GM10248 (cell line): ENCODE measurements at regions of chr3 and their contacts with region 1.

Region 1: DNA sequence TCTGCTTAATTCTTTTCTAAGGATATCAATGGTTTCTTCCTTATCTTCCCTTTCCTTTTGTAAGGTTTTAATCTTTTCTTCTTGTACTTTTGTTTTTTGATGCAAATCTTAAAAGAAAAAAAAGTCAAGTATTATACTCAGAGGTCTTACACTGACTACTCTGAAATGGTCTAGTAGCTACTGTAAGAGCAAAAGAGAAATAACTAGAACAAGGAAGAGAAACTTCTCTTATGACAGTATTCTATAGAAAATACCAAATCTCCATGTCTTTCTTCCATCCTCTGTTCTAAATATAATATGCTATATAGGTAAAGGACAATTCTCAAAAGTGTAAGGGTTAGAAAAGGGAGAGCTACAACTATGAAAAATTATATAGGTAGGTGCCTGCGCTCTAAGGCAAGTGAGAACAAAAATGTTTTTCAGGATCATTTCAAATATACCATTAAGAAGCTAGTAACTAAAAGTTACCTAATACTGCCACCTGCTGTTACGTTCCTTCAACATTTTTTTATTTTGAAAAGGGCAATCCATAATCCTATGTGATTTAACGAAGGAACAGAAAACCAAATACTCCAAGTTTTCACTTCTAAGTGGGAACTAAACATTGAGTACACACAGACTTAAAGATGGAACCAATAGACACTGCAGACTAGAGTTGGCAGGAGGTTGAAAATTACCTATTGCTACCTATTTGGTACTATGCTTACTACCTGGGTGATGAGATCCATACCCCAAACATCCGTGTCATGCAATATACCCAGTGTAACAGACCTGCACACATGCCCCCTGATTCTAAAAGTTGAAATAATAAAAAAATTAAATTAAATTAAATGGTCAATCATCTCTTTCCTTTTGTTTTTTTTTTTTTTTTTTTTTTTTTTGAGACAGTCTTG is 36.7 kb downstream of the CIP2A start:
- DNase-seq: peak; percentile 12
- CTCF ChIP-seq: peak; percentile 55

Region 2: DNA sequence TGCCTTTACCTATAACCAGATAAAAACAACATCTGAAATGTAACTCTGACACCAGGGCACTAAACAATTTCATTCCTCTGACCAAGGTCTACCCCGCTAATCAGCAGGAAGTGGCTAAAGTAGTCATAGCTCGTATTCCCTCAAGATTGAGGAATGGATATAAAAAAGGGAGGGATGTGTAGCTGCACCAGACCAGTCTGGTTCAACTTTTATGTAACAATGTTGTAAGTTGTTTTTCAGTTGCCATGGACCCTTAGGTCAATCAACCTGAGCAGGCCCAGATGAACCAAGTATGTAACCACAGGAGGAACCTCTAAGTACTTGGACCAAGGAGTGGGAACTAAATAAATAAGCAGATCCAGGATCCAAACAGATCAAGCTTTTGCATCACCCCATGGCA is 301.9 kb before region 1 on chr3:
- CTCF ChIA-PET with region 1: no interaction called
- POLR2A ChIA-PET with region 1: no interaction called
- DNase-seq: no peak
- CTCF ChIP-seq: no peak

Region 3: DNA sequence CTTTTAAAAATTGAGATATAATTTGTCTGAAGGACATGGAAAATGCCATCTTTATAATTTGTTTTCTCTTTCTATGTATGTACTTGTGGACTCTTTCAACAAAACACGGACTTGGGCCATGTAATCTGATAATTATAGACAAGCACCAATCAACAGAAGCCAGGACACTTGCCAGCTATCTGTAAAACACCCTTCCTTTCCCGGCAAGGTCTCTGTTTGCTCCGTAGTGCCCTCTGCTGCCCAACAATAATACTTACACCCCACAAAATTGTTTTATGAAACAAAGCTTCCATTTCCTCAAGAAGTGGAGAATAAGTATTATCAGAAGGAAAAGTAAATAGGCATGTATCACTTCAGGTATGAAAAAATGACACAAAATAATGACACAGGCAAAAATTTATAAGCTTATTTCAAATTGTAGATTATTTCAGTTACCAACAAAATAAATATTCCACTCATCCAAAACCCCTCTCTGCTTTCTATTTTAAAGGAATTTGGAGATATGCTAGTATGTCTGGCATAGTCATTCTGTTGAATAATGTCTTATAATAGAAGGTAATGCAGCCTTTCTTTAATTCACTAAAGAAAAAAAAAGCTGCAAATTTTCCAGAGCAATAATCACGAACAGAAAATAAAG is 74.9 kb before region 1 on chr3:
- CTCF ChIA-PET with region 1: interaction called, 14 read pairs
- POLR2A ChIA-PET with region 1: no interaction called
- DNase-seq: peak; percentile 36
- CTCF ChIP-seq: peak; percentile 75

Region 4: DNA sequence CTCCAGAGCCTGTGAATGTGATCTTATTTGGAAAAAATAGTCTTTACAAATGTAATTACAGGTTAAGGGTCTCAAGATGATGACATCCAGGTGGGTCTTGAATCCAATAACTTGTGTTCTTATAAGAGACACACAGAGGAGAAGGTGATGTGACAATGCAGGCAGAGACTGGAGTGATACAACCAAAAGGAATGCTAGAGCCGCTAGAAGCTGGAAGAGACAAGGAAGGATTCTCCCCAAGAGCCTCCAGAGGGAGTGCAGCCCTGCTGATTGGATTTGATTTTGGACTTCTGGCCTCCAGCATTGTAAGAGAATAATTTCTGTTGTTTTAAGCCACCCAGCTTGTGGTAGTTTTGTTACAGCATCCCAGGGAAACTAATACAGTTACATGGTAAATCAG is 51.8 kb before region 1 on chr3:
- CTCF ChIA-PET with region 1: interaction called, 217 read pairs
- POLR2A ChIA-PET with region 1: no interaction called
- DNase-seq: no peak
- CTCF ChIP-seq: no peak

Region 5: DNA sequence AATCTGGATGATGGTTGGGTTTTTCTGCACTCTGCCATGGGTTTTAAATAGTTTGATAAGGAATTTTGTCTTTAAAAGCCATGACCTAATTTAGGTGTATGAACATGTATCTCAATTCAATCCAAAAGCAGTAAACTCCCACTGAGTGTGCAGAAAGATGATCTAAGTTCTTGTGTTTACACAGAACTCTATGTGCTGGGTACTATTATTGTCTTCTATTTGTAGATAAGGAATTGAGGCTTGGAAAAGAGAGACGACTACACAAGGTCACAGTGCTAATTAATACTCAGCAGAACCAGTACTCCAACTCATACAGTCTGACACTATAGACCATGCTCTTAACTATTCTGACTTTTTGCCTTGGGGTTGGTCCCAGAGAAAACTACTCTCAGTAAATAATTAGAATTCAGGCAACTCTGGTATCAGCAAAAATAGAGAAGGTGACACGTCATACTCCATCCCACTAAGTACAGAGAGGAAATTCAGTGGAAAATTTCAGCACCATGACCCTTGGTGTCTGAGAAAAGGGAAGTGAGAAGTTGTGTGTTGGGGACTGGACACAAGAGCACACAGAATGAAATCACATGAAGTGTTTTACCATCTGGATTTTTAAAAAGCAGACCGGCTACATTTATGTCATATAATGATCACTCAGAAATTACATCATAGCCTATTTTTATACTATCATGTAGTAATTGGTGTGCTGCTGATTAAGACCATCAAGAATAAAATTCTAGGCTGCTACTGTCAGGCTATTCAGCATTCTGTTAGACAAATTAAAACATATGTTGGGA is 23.9 kb before region 1 on chr3:
- CTCF ChIA-PET with region 1: interaction called, 55 read pairs
- POLR2A ChIA-PET with region 1: no interaction called
- DNase-seq: peak; percentile 28
- CTCF ChIP-seq: no peak

Region 6: GRCh38 chr3:108564564-108564963 is 12.1 kb after region 1 on chr3:
- CTCF ChIA-PET with region 1: interaction called, 42 read pairs
- POLR2A ChIA-PET with region 1: no interaction called
- DNase-seq: no peak
- CTCF ChIP-seq: no peak

Region 7: DNA sequence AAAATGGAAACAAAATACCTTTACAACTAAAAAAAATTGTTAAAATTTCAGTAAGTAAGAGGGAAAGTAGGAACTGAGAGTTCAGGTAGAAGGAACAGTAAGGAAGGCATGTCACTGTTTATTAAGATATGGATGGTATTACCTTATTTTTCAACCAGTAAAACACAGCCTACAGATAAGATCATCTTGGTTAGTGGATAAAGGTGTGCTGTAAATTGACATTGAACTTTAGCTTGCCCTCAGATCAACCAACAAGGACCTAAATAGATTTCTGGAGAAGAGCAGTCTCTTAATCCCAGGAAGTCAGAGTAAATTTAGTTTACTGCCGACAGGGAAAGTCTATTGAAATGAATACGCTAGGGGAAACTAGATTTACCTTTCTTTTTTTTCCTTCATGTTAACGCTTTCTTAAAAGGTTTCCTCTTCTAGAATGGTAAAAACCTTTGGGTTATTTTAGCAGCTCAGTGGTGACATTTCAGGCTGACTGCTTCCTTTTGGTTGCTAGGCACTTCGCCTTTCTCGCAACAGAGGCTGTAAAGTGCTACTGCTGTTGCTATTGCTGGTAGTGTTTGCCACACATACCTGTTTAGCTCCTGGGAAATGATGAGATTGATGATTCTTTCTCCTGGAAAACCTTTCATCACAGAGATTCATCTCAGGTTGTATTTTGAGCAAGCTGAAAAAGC is 49.9 kb after region 1 on chr3:
- CTCF ChIA-PET with region 1: interaction called, 13 read pairs
- POLR2A ChIA-PET with region 1: no interaction called
- DNase-seq: peak; percentile 14
- CTCF ChIP-seq: no peak